ENCODE measurements at regions of chr1 and their contacts with region 1.

Region 1: DNA sequence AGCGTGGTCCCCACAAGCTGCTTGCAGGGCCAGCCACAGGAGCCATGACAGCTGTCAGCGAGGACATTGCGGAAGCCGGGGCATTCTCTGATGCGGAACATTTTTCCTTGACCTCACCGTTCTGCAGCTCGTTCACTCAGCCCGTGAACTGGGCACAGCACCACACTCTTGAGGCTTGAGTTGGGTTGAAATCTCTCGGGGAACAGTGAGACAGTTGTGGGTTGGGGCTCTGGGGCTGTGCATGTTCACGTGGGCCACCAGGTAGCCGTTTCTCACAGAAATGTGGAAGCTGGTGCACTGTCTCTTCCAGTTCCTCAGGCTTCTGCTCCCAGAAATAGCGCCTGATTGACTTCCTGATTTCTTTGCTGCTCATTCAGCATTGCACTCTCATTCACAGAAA is 69.8 kb downstream of the SPSB1 start:
- DNase-seq: peak; percentile 25
- ATAC-seq: peak; percentile 68
- H3K4me3 Mint-ChIP-seq: peak overlapping the region; percentile 78
- H3K27ac Mint-ChIP-seq: no peak overlapping the region
- H3K4me1 Mint-ChIP-seq: peaks cover 22% of the 10 kb centered on the region
- H3K27me3 Mint-ChIP-seq: no peaks in the 10 kb centered on the region
- CTCF ChIP-seq: no peak

Region 2: GRCh38 chr1:9317591-9318417 is 44.7 kb before region 1 on chr1:
- CTCF ChIA-PET with region 1: no interaction called
- POLR2A ChIA-PET with region 1: no interaction called
- intact Hi-C with region 1: loop called (anchors 5 kb)
- DNase-seq: no peak
- ATAC-seq: no peak
- H3K4me3 Mint-ChIP-seq: no peak overlapping the region
- H3K27ac Mint-ChIP-seq: no peak overlapping the region
- H3K4me1 Mint-ChIP-seq: peaks cover 31% of the 10 kb centered on the region
- H3K27me3 Mint-ChIP-seq: no peaks in the 10 kb centered on the region
- CTCF ChIP-seq: no peak

Region 3: DNA sequence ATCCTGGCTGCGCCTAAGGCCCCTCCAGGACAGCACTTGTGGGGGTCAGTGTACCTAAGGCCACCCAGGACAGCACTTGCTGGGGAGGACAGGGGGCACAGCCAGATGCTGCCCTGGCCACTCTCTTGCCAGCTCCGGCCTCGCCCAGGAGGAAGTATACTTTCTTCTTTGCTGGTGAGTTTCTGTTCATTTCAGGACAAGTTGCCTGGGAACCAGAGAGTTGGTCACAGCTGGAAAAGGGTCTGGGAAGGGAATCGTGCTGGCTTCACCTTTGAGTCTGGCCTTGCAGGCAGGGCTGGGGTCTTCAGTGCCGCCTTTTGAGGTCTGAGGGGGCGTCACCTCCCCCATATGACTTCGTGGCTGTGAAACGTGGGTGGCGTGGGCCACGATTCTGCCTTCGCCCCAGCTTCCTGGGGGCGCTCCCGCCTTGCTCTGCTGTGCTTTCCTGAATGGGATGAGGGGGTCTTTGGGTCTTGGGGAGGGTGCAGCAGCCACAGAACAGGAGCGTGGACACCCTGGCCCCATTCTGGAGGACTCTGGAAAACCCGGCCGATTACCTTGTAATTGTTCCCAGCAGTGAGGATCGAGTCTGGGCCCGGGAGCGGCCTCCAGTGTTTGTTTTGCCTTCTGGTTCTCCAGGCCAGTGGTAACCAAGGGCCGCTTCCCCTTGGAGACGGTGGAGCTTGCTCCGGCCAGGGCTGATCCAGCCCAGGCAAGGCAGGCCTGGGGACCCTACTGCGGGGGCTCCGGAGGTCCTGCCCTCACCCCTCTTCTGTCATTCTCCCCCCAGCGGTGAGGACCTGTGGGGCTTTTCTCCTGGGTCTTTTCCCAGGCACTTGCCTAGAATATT is 23.9 kb before region 1 on chr1:
- CTCF ChIA-PET with region 1: no interaction called
- POLR2A ChIA-PET with region 1: no interaction called
- intact Hi-C with region 1: no loop called
- DNase-seq: no peak
- ATAC-seq: no peak
- H3K4me3 Mint-ChIP-seq: no peak overlapping the region
- H3K27ac Mint-ChIP-seq: no peak overlapping the region
- H3K4me1 Mint-ChIP-seq: no peaks in the 10 kb centered on the region
- H3K27me3 Mint-ChIP-seq: no peaks in the 10 kb centered on the region
- CTCF ChIP-seq: no peak

Region 4: GRCh38 chr1:9388335-9389180 is 26.1 kb after region 1 on chr1:
- CTCF ChIA-PET with region 1: no interaction called
- POLR2A ChIA-PET with region 1: no interaction called
- intact Hi-C with region 1: no loop called
- DNase-seq: no peak
- ATAC-seq: peak; percentile 28
- H3K4me3 Mint-ChIP-seq: no peak overlapping the region
- H3K27ac Mint-ChIP-seq: no peak overlapping the region
- H3K4me1 Mint-ChIP-seq: no peaks in the 10 kb centered on the region
- H3K27me3 Mint-ChIP-seq: peaks cover 2% of the 10 kb centered on the region
- CTCF ChIP-seq: no peak

Region 5: DNA sequence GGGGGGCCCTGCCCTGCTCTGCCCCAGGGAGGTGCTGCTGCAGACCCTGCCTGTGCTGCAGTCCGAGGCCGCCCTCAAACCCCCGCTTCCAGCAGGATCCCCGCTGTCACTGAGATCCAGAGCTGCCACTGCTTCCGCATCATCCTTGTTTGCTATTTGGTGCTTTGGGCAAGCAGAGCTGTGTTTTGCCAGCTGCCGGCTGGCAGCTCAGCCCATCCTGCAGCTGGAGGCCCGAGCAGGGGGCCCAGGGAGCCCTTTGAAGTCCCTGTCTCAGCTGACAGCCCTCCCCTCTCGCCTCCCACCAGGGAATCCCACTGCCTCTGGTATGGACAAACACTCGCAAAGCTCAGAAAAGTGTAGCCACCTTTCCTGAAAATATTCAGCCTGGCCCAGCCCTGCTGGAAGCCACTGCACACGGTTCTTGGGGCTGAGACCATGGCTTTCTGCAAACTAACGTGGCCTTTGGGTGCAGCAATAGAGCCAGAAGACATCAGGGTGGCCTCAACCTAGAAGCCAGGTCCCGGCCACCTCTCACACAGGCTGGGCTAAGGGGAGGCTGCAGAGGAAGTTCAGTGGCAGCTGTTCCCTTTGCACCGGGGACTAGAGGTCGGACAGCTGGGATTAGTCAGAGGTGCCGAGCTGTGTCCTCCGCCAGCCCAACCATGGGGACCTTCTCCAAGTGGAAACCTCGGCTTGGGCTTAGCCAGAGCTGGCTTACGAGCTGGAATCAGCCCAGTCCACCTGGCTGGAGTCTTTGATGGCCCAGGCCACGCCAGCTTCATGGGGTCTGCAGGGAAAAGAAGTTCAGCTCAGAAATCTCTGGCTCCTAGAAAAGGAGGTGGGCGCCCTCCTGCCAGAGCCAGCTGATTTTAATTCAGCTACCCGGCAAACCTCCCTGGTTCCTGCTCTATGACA is 37.3 kb after region 1 on chr1:
- CTCF ChIA-PET with region 1: no interaction called
- POLR2A ChIA-PET with region 1: no interaction called
- intact Hi-C with region 1: no loop called
- DNase-seq: no peak
- ATAC-seq: peak; percentile 49
- H3K4me3 Mint-ChIP-seq: no peak overlapping the region
- H3K27ac Mint-ChIP-seq: no peak overlapping the region
- H3K4me1 Mint-ChIP-seq: peaks cover 13% of the 10 kb centered on the region
- H3K27me3 Mint-ChIP-seq: no peaks in the 10 kb centered on the region
- CTCF ChIP-seq: no peak